Mammary epithelial cell (primary cell): ENCODE measurements at regions of chr10 and their contacts with region 1.

Region 1: DNA sequence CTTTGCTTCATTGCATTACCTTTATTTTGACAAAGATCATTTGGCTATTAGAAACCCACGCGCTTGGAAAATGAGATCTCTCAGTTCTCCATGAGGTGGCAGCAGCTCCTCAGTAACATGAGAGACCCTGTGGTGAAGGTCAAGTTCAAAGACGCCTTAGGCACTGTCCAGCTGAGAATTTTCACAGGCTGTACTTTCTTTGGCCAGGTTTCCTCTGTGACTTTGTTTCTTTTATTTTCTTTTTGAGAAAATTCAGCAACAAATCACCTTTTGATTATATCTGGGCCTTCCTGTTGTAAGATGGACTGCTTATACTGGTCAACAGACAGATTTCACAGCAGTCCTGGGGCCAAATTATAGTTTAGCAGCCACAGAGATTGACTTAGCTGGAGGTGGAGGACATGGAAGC is 54.5 kb downstream of the RAB18 start:
- DNase-seq: peak; percentile 40
- H3K4me3 ChIP-seq: no peak overlapping the region
- H3K27ac ChIP-seq: no peak overlapping the region
- H3K4me1 ChIP-seq: no peaks in the 10 kb centered on the region
- H3K27me3 ChIP-seq: no peaks in the 10 kb centered on the region
- CTCF ChIP-seq: peak; percentile 74 to 77

Region 2: GRCh38 chr10:27601503-27601902 is 42.9 kb after region 1 on chr10:
- CTCF ChIA-PET with region 1: no interaction called
- dilution Hi-C with region 1: no loop called
- in situ Hi-C with region 1: no loop called
- intact Hi-C with region 1: no loop called
- DNase-seq: no peak
- H3K4me3 ChIP-seq: no peak overlapping the region
- H3K27ac ChIP-seq: no peak overlapping the region
- H3K4me1 ChIP-seq: no peaks in the 10 kb centered on the region
- H3K27me3 ChIP-seq: no peaks in the 10 kb centered on the region
- CTCF ChIP-seq: no peak

Region 3: GRCh38 chr10:27661514-27662286 is 103.1 kb after region 1 on chr10:
- CTCF ChIA-PET with region 1: no interaction called
- dilution Hi-C with region 1: loop called (anchors 5 kb)
- in situ Hi-C with region 1: loop called (anchors 5 to 10 kb)
- intact Hi-C with region 1: loop called (anchors 1 kb)
- DNase-seq: peak; percentile 4
- H3K4me3 ChIP-seq: no peak overlapping the region
- H3K27ac ChIP-seq: no peak overlapping the region
- H3K4me1 ChIP-seq: no peaks in the 10 kb centered on the region
- H3K27me3 ChIP-seq: no peaks in the 10 kb centered on the region
- CTCF ChIP-seq: no peak

Region 4: DNA sequence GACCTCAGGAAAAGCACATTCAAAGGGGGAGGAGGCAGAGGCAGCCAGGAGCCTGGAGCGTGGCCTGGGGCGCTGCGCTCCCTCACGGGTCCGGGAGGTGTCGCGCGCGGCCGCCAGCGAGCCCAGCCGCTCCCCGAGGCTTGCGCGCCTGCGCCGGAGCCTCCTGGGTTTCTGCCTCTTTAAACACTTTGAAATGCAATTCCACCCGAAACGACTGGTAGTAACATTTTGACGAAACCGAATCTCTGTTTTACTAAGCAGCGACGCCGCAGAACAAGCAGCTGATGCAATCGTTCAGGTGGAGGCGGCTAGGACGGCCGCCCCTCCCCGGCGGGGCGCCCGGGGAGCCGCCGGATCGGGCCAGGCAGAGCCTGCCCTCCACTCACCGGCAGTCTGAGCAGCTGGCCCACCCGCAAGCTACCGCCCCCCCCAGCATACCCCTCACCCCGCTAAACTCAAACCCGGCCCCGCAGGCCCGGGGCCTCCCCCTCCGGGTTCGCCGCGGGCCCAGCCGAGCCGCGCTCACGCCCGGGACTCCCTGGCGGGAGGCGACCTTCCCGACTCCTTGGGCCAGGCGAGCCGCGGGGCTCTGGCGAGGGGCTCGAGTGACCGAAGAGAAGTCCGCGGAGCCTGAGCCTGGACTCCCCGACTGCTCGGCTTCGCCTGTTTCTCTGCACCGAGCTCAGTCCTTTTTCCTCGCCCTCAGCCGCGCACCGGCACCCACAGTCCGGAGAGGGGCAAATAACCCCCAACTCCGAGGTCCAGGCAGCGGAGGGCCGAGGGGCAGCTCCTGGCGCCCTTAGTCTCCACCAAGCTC is 183.8 kb after region 1 on chr10:
- CTCF ChIA-PET with region 1: no interaction called
- dilution Hi-C with region 1: no loop called
- in situ Hi-C with region 1: no loop called
- intact Hi-C with region 1: loop called (anchors 5 kb)
- DNase-seq: peak; percentile 63
- H3K4me3 ChIP-seq: peak overlapping the region; percentile 41 to 47 (median 43)
- H3K27ac ChIP-seq: no peak overlapping the region
- H3K4me1 ChIP-seq: peaks cover 26% of the 10 kb centered on the region
- H3K27me3 ChIP-seq: peaks cover 48% of the 10 kb centered on the region
- CTCF ChIP-seq: peak; percentile 35 to 60

Region 5: GRCh38 chr10:28241741-28242399 is 683.3 kb after region 1 on chr10:
- CTCF ChIA-PET with region 1: no interaction called
- dilution Hi-C with region 1: no loop called
- in situ Hi-C with region 1: loop called in 1 of 2 experiments (anchors 25 kb)
- intact Hi-C with region 1: loop called (anchors 1 kb)
- DNase-seq: peak; percentile 43
- H3K4me3 ChIP-seq: no peak overlapping the region
- H3K27ac ChIP-seq: no peak overlapping the region
- H3K4me1 ChIP-seq: peaks cover 9% of the 10 kb centered on the region
- H3K27me3 ChIP-seq: no peaks in the 10 kb centered on the region
- CTCF ChIP-seq: peak; percentile 88 to 89

Region 6: GRCh38 chr10:29050081-29050480 is 1491.5 kb after region 1 on chr10:
- CTCF ChIA-PET with region 1: no interaction called
- dilution Hi-C with region 1: no loop called
- in situ Hi-C with region 1: no loop called
- intact Hi-C with region 1: no loop called
- DNase-seq: no peak
- H3K4me3 ChIP-seq: no peak overlapping the region
- H3K27ac ChIP-seq: no peak overlapping the region
- H3K4me1 ChIP-seq: no peaks in the 10 kb centered on the region
- H3K27me3 ChIP-seq: no peaks in the 10 kb centered on the region
- CTCF ChIP-seq: no peak